GM10248 (cell line): ENCODE measurements at regions of chr1 and their contacts with region 1.

Region 1: GRCh38 chr1:206808615-206809014 is 36.3 kb upstream of the IL10 start:
- DNase-seq: no peak
- CTCF ChIP-seq: peak; percentile 76

Region 2: DNA sequence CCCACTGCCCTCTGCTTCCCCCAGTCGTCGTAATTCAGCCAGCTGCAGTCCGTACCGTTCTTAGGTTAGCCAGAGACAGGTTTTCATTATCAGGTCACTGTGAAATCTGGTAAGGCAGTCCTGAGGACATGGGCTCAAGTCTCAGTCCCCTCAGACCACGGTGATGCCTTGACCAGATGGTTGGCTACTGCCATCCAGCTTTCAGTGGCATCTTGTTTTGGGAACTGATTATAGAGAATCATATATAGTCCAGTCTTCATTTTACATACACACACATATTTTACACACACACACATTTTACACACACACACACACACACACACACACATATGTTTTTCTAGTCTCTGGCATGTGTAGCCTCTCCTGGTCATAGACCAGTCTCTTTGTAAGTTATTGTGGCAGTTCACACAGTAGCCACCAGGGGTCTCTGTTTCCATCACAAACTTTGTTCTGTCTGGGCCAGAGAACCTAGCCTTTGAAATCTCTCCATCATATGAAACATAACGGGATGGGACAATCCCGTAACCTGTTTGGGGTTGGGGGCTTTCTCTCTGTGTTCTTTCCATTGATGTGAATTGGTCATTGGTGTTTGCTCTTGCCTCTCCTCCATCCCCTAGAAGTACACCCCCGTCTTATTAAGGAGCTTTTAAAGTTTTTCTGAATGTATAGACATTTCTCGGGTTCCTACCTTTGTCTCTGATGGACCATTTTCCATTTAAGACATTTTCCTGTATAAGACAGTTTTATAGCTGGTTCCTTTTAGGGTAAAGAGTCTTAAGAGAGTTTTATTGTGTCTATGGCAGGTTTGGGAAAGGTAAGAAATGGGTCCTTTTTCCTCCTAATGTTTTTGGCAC is 346.8 kb before region 1 on chr1:
- CTCF ChIA-PET with region 1: no interaction called
- POLR2A ChIA-PET with region 1: no interaction called
- DNase-seq: peak; percentile 79
- CTCF ChIP-seq: peak; percentile 81

Region 3: GRCh38 chr1:206635080-206635977 is 173.3 kb before region 1 on chr1 and contains the start of gene DYRK3:
- CTCF ChIA-PET with region 1: interaction called, 16 read pairs
- POLR2A ChIA-PET with region 1: no interaction called
- DNase-seq: peak; percentile 97
- CTCF ChIP-seq: no peak

Region 4: DNA sequence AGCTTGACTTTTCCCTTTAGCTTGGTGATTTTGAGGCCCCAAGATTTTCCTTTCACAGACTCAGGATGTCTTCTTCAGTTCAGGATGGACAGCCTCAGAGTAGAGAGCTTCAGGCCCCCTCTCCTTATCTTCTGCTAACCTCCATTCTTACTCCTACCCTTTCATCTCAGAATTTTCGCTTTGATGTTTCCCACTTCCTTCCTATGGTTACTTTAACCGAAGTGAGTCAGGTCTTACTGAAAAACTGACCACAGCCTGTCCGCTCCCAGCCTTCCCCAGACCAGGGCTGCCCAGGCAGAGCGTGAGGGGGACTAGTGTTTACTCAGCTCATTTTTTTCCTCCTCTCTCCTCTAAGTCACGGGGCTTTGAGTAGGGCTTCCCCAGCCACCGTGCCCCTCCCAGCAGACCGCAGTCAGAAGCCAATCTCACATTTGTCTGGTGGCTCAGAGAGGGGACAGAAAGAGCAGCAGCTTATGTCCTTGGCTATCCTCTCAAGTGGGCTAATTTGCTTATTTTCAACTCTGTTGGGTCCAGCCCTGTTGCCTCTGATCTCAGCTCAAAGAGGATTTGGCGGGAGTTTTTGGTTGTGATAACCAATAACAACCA is 42.3 kb before region 1 on chr1:
- CTCF ChIA-PET with region 1: interaction called, 288 read pairs
- POLR2A ChIA-PET with region 1: no interaction called
- DNase-seq: peak; percentile 57
- CTCF ChIP-seq: no peak

Region 5: DNA sequence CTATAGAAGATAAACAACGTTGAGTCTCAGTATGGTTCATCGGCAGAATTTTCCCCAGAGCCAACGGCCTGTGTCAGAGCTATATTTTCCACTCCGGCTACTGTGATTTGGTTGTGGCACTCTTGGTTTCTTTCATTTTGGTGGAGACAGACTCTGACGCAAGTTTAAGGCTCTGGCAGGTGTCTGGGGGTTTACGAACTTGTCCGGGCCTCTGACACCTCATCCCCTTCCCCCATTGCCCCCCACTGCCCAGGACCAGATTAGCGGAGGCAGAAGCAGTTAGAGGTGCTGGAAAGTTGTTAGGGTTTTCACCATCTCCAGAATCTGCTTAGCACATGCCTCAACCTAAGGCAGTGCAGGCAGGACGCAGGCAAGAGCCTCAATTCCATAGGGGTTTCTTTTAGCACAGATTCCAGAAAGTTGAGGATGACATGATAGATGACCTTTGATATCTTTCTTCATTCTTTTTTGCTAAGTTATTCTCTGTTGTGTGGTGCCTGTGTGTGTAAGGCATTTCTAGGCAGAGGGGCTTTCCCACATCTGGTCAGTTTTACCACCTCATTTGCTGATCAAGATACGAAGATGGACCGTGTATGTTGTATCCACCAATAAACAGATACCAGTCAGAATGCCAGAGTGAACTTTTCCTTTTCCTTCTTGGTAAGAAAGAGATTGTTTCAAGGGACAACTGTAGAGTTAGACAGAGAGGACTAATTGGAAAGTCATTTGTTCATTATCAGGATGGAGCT is 17.9 kb before region 1 on chr1:
- CTCF ChIA-PET with region 1: interaction called, 24 read pairs
- POLR2A ChIA-PET with region 1: interaction called, 3 read pairs
- DNase-seq: peak; percentile 40
- CTCF ChIP-seq: no peak

Region 6: DNA sequence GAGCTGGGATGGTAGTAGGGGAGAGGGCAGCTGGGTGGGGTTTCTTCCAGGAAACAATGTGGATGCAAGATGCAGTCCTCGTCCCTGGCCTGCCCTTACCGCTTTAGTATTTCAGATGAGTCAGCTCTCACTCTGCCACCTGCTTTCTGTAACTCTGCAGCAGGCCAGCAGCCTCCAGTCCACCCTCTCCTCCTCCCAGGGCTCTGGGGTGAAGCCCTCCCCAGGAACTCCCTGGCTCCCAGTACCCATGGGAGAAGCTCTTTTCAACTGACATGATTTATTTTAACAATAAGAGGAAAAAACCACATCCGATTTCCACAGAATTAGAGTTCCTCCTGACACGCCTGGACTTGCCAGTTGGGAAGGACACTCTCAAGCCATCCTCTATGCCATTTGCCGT is 17.8 kb after region 1 on chr1:
- CTCF ChIA-PET with region 1: interaction called, 40 read pairs
- POLR2A ChIA-PET with region 1: no interaction called
- DNase-seq: no peak
- CTCF ChIP-seq: no peak